PC-9 (cell line): ENCODE measurements at regions of chr3 and their contacts with region 1.

Region 1: DNA sequence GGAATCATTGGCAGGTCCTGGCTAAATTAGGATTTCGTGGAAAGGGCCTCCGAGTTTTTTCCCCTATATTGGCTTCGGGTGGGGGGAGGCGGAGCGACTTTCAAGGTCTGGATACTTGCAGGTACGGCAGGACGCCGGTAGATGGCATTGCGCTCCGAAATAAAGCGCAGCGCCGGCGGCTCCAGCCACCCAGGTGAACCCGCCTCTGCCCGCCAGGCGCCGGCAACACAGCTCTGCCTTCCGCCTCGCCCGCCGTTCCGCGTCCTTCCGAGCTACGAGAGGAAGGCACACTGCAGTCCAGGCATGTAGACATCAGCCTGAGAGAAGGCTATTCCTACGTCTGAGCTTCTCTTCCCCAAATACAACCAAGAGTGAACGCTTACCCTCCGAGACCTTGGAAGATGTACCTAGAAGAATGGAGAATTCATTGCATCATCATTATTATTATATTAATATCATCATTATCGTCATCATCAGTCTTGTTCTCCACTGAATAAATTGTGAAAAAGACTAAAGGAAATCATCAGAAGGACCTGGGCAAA is 514.1 kb downstream of the MECOM start:
- DNase-seq: peak; percentile 73 to 95
- H3K4me3 ChIP-seq: peak overlapping the region; percentile 67
- H3K27ac ChIP-seq: no peak overlapping the region
- H3K4me1 ChIP-seq: peaks cover 25% of the 10 kb centered on the region
- H3K27me3 ChIP-seq: no peaks in the 10 kb centered on the region
- CTCF ChIP-seq: peak; percentile 85

Region 2: DNA sequence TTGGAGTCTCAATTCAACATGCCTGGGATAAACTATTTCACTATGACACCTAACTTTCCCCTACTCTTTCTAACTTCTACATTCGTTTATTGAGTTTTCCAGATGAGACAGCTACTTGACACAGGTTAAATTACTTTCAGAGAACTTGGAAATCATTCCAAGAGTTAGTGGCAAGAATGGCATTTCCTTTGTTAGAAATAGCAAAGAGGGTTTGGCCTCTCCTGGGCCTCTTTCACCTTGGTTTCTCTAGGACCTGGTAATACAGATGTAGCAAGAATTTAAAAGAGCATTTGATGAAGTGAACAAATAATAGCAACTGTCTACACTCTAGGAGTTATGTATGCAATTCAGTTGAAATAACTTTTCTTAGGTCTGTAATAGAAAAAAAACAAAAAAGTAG is 234.8 kb before region 1 on chr3:
- CTCF ChIA-PET with region 1: no interaction called
- POLR2A ChIA-PET with region 1: interaction called, 13 read pairs
- intact Hi-C with region 1: no loop called
- DNase-seq: no peak
- H3K4me3 ChIP-seq: no peak overlapping the region
- H3K27ac ChIP-seq: no peak overlapping the region
- H3K4me1 ChIP-seq: no peaks in the 10 kb centered on the region
- H3K27me3 ChIP-seq: no peaks in the 10 kb centered on the region
- CTCF ChIP-seq: no peak

Region 3: GRCh38 chr3:169094204-169094603 is 55.2 kb before region 1 on chr3:
- CTCF ChIA-PET with region 1: no interaction called
- POLR2A ChIA-PET with region 1: no interaction called
- intact Hi-C with region 1: no loop called
- DNase-seq: no peak
- H3K4me3 ChIP-seq: no peak overlapping the region
- H3K27ac ChIP-seq: no peak overlapping the region
- H3K4me1 ChIP-seq: no peaks in the 10 kb centered on the region
- H3K27me3 ChIP-seq: no peaks in the 10 kb centered on the region
- CTCF ChIP-seq: no peak

Region 4: DNA sequence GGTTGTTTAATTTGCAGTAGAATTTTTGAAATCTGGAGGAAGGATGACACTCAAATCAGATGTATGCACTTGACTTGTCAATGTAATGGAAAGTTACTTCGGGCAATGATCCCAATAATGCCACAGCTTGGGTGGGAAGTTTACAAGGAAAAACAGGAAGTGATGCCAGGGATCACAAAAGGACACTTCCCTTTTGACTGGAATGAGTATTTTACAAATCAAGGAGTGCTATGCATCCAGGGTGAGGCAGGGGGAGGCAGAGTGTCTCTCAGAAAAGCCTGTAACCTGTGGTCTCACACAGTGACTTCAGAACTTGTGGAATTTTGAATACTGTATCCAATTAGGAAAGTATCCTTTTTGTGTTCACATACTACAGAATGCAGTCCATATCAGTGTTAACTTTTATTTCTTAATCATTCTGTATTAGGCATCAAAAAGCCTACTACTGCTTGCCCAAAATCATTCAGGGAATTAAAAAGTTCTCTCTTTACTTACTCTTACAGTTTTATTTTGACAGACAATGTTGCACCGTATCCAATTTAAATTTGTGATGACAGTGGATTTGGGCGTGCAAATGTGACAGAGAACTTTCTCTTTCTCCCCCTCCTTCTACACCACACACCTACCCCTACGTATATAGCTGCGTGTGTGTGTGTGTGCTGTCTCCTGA is 69.0 kb after region 1 on chr3:
- CTCF ChIA-PET with region 1: interaction called, 9 read pairs
- POLR2A ChIA-PET with region 1: no interaction called
- intact Hi-C with region 1: loop called (anchors 1 kb)
- DNase-seq: peak in 1 of 2 experiments; percentile 52
- H3K4me3 ChIP-seq: no peak overlapping the region
- H3K27ac ChIP-seq: no peak overlapping the region
- H3K4me1 ChIP-seq: no peaks in the 10 kb centered on the region
- H3K27me3 ChIP-seq: no peaks in the 10 kb centered on the region
- CTCF ChIP-seq: peak; percentile 71

Region 5: DNA sequence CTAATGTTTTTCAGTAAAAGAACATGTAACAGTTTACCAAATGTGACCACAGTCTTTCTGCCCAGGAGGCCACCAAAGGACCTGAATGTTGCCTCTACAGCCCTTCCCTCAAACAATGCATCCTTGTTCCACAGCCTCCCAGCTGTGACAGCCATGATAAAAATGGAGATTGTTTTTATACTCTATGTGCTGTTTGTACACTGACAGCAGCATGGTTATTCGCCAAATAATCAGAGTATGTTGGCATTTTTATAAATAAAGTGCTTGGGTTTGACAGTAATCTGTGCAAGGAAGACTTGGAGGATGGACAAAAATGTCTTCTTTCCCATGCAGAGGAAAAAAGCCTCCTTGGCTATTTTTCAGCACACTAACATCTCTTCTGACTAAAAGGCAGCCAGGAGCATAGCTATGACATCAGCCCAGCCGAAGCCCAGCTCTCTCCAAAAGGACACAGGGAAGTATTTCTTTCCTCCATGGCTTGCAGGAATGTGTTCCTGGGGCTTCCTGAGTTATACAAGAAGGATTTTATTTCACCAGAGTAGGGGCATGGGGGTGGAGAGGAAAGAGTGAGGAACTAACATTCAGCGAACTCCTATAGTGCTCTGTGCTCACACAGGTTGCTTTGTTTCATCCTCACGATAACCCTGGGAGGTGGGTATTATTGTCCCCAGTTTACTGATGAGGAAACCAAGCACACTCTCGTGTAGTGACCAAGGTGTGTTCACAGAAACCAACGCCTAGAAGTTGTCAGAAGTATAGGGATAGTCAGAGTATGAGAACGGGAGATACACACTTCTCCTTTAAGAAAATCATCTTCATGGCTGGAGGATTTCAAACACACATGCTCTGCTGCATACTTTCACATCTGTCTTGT is 174.4 kb after region 1 on chr3:
- CTCF ChIA-PET with region 1: no interaction called
- POLR2A ChIA-PET with region 1: interaction called, 5 read pairs
- intact Hi-C with region 1: loop called (anchors 5 kb)
- DNase-seq: no peak
- H3K4me3 ChIP-seq: no peak overlapping the region
- H3K27ac ChIP-seq: no peak overlapping the region
- H3K4me1 ChIP-seq: peaks cover 70% of the 10 kb centered on the region
- H3K27me3 ChIP-seq: no peaks in the 10 kb centered on the region
- CTCF ChIP-seq: no peak

Region 6: GRCh38 chr3:169404520-169404890 is 255.1 kb after region 1 on chr3:
- CTCF ChIA-PET with region 1: interaction called, 10 read pairs
- POLR2A ChIA-PET with region 1: no interaction called
- intact Hi-C with region 1: no loop called
- DNase-seq: no peak
- H3K4me3 ChIP-seq: no peak overlapping the region
- H3K27ac ChIP-seq: no peak overlapping the region
- H3K4me1 ChIP-seq: no peaks in the 10 kb centered on the region
- H3K27me3 ChIP-seq: no peaks in the 10 kb centered on the region
- CTCF ChIP-seq: no peak

Region 7: GRCh38 chr3:169662132-169662842 is 512.9 kb after region 1 on chr3:
- CTCF ChIA-PET with region 1: interaction called, 9 read pairs
- POLR2A ChIA-PET with region 1: interaction called, 5 read pairs
- intact Hi-C with region 1: loop called (anchors 1 kb)
- DNase-seq: peak; percentile 75 to 93
- H3K4me3 ChIP-seq: peak overlapping the region; percentile 72
- H3K27ac ChIP-seq: peak overlapping the region; percentile 51
- H3K4me1 ChIP-seq: peaks cover 21% of the 10 kb centered on the region
- H3K27me3 ChIP-seq: no peaks in the 10 kb centered on the region
- CTCF ChIP-seq: peak; percentile 83